ENCODE measurements at regions of chrX and their contacts with region 1.

Region 1: DNA sequence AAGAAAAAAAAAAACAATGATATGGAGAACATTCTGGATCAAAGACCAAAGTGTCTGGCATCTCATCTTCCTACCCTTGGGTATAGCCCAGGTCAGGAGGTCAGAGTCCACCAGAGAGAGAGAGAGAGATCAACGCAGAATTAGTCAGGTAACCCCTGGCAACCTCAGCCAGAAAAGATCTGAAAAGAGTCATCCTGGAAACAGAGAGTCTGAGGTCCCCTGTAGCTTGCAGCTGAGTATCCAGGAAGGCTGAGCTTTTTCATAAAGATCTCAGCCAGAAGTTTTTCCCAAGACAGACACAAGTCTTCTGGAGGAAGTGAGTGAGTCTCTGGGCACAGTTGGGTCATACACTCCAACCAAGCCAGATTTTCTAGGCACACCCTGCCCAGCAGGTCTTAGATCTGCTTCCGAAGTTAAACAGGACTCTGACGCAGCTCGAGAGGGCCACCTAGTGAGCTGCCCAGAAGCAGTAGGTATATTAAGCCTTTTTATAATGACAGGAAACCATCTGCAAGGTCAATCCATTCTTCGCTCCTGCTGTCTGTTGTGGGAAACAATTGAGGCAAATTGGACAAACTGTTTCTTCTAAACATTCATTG is 35.7 kb downstream of the ACE2 start:
- DNase-seq: peak; percentile 23
- H3K4me3 ChIP-seq: no peak overlapping the region
- H3K27ac ChIP-seq: no peak overlapping the region
- H3K4me1 ChIP-seq: no peaks in the 10 kb centered on the region
- CTCF ChIP-seq: peak; percentile 69

Region 2: DNA sequence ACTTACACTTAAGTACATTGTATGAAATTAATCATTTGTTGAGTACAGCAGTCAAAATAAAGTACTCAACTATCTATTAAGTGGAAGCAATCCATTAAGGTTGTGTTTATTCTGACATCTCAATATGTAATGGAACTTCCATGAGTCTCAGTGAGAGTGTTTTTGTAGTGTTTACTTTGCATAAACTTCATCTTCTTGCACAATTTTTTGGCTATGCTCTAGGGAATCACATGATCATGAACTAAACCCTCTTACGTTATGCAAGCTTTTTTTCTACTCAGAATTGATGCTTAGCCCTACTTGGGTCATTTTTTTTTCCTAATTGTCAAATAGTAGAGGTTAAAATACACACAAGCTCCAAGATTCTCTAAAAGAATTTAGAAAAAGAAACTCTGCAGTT is 208.6 kb before region 1 on chrX:
- CTCF ChIA-PET with region 1: no interaction called
- POLR2A ChIA-PET with region 1: no interaction called
- intact Hi-C with region 1: loop called (anchors 10 kb)
- DNase-seq: no peak
- H3K4me3 ChIP-seq: no peak overlapping the region
- H3K27ac ChIP-seq: no peak overlapping the region
- H3K4me1 ChIP-seq: no peaks in the 10 kb centered on the region
- CTCF ChIP-seq: no peak

Region 3: GRCh38 chrX:15493118-15493962 is 71.7 kb before region 1 on chrX and contains the start of gene PIR:
- CTCF ChIA-PET with region 1: no interaction called
- POLR2A ChIA-PET with region 1: no interaction called
- intact Hi-C with region 1: loop called (anchors 2 kb)
- DNase-seq: peak; percentile 50
- H3K4me3 ChIP-seq: peak within 1 kb of the TSS; percentile 63
- H3K27ac ChIP-seq: no peak within 1 kb of the TSS
- H3K4me1 ChIP-seq: peaks cover 6% of the 10 kb centered on the region
- CTCF ChIP-seq: peak; percentile 66
- total RNA-seq, gene PIR: 0.51 and 1.9 TPM in 2 replicates

Measured in OCI-LY7 (cell line).